ENCODE measurements at regions of chr2 and their contacts with region 1.

Region 1: GRCh38 chr2:50118905-50119702 is 912.8 kb downstream of the NRXN1 start:
- DNase-seq: no peak
- H3K4me3 ChIP-seq: no peak overlapping the region
- H3K27ac ChIP-seq: no peak overlapping the region
- H3K4me1 ChIP-seq: no peaks in the 10 kb centered on the region
- H3K27me3 ChIP-seq: peaks cover 5% of the 10 kb centered on the region; the same call in 1 of the 2 replicates
- CTCF ChIP-seq: no peak

Region 2: DNA sequence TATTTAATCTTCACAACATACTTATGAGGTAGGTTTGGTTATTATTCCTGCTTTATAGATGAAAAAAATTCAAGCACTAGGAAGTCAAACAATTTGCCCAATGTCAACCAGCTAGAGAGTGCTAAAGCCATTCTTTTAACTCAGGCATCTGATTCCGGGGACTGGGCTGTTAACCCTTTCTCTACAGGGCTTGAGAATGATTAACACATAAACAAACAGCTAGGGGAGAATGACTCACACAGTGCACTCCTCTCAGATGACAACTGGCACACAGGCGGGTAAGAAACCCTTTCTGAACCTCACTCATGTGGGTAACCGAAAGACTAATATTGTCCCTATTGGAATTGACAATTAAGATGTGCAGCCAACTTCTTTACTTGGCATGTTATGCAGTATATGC is 878.5 kb before region 1 on chr2:
- CTCF ChIA-PET with region 1: no interaction called
- POLR2A ChIA-PET with region 1: no interaction called
- intact Hi-C with region 1: no loop called
- DNase-seq: no peak
- H3K4me3 ChIP-seq: no peak overlapping the region
- H3K27ac ChIP-seq: no peak overlapping the region
- H3K4me1 ChIP-seq: no peaks in the 10 kb centered on the region
- H3K27me3 ChIP-seq: no peaks in the 10 kb centered on the region
- CTCF ChIP-seq: no peak

Region 3: DNA sequence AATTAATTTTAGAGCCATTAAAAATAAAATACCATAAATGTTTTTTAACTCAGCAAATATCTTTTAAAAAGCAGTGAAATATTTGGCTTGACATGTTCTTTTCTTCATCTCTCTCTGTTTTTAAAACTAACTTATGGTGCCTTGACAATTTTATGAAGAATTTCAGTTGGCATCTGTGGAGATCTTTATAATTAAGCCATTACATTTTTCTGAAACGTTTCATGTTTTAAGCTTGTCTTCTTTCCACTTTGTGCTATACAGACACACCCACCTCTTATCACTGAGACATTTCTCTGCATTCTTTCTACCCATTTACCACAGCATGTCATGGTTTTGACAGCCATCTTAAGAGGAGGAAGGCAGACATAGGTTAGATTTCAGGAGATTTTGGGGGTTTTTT is 49.6 kb before region 1 on chr2:
- CTCF ChIA-PET with region 1: no interaction called
- POLR2A ChIA-PET with region 1: no interaction called
- intact Hi-C with region 1: loop called (anchors 1 kb)
- DNase-seq: no peak
- H3K4me3 ChIP-seq: no peak overlapping the region
- H3K27ac ChIP-seq: no peak overlapping the region
- H3K4me1 ChIP-seq: no peaks in the 10 kb centered on the region
- H3K27me3 ChIP-seq: peaks cover 12% of the 10 kb centered on the region; the same call in 1 of the 2 replicates
- CTCF ChIP-seq: no peak

Region 4: GRCh38 chr2:50207881-50208280 is 88.8 kb after region 1 on chr2:
- CTCF ChIA-PET with region 1: no interaction called
- POLR2A ChIA-PET with region 1: no interaction called
- intact Hi-C with region 1: no loop called
- DNase-seq: no peak
- H3K4me3 ChIP-seq: no peak overlapping the region
- H3K27ac ChIP-seq: no peak overlapping the region
- H3K4me1 ChIP-seq: no peaks in the 10 kb centered on the region
- H3K27me3 ChIP-seq: no peaks in the 10 kb centered on the region
- CTCF ChIP-seq: no peak